Colonic mucosa (tissue), 4 donors: ENCODE measurements at regions of chr2 and their contacts with region 1.

Region 1: DNA sequence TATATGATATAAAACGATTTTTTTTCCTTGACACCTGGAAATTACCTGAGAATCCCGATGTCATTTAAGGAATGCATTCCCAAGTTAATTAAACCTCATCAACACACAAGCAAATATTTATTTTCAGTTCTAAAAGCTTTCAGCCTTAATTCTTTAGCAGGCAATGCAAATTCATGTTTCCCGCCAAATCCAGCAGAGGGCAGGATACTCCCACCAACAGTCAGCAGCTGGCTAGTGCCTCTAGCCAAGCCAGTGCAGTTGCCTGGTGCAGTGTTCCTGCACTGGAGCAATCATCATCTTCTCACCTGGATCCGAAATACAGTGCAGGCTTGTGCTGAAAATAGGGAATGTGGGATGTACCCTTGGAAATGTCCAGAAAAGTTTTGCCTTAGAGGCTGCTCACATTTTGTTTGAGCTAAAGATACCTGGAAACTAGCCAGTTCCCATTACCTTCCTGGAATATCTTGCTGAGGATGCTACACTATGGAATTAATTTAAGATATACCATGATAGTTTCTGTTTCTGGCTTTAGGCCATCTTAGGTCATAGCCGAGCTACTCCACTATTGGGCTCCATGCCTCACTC is 48.4 kb upstream of the CYTIP start:
- DNase-seq: peak; percentile 77
- H3K4me3 ChIP-seq: no peak overlapping the region
- H3K27ac ChIP-seq: no peak overlapping the region
- H3K4me1 ChIP-seq: no peaks in the 10 kb centered on the region
- H3K27me3 ChIP-seq: no peaks in the 10 kb centered on the region
- CTCF ChIP-seq: peak; percentile 64

Region 2: GRCh38 chr2:157302492-157303099 is 189.7 kb before region 1 on chr2:
- intact Hi-C with region 1: loop called (anchors 10 kb)
- DNase-seq: no peak
- H3K4me3 ChIP-seq: no peak overlapping the region
- H3K27ac ChIP-seq: no peak overlapping the region
- H3K4me1 ChIP-seq: no peaks in the 10 kb centered on the region
- H3K27me3 ChIP-seq: no peaks in the 10 kb centered on the region
- CTCF ChIP-seq: peak; percentile 71

Region 3: GRCh38 chr2:157336137-157337010 is 155.9 kb before region 1 on chr2:
- intact Hi-C with region 1: loop called (anchors 5 kb)
- DNase-seq: peak; percentile 36
- H3K4me3 ChIP-seq: no peak overlapping the region
- H3K27ac ChIP-seq: no peak overlapping the region
- H3K4me1 ChIP-seq: no peaks in the 10 kb centered on the region
- H3K27me3 ChIP-seq: no peaks in the 10 kb centered on the region
- CTCF ChIP-seq: peak; percentile 67

Region 4: DNA sequence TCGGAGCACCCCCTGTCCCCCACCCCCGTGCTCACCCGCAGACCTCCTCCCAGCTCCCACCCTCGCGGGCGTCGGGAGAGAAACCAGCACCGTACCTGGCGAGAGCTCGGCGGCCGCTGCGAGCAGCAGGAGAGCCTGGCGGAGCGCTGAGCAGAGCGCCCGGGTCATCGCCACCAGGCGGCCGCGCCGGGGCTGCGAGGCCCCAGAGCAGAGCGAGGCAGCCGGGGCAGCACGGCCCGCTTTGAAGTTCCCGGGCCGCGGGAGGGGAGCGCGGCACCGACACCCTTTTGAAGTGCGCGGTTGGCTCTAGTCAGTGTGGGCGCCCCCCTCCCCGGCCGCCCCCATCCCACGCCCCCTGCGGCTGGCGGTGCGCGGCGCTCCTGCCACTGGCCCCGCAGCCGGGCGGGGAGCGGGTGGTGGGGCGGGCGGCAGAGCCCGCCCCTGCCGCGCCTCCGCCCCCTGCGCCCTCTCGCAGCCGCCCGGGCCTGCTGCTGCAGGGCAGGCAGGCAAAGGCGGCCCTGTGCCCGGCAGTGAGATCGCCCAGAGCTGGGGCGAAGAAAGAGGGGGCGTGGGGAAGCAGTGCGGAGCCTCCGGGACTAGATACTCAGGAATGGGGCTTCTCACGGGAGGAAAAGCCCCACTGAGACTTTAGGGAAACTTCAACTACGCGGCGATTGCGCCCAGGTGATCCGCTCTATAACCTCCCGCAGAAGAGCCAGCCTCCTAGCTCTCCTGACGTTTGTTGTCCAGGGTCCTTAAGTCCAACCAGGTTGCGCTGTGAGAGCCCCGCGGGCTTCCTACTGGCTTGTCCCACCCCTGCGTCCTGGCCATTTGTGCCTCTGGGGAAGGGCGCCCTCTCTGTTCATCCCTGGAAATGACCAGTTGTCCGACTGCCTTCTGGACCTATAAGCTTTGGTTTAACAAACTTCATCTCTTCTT is 136.5 kb after region 1 on chr2 and contains the start of gene ACVR1C:
- intact Hi-C with region 1: loop called (anchors 10 kb)
- DNase-seq: peak; percentile 91
- H3K4me3 ChIP-seq: peak within 1 kb of the TSS; percentile 56
- H3K27ac ChIP-seq: peak within 1 kb of the TSS; percentile 84
- H3K4me1 ChIP-seq: no peaks in the 10 kb centered on the region
- H3K27me3 ChIP-seq: no peaks in the 10 kb centered on the region
- CTCF ChIP-seq: peak; percentile 68
- total RNA-seq, gene ACVR1C: 5.7 to 18.2 TPM

Region 5: GRCh38 chr2:157777427-157777826 is 285.1 kb after region 1 on chr2:
- intact Hi-C with region 1: loop called (anchors 10 kb)
- DNase-seq: peak; percentile 45
- H3K4me3 ChIP-seq: no peak overlapping the region
- H3K27ac ChIP-seq: no peak overlapping the region
- H3K4me1 ChIP-seq: no peaks in the 10 kb centered on the region
- H3K27me3 ChIP-seq: no peaks in the 10 kb centered on the region
- CTCF ChIP-seq: peak; percentile 47

Region 6: GRCh38 chr2:158006961-158007719 is 514.9 kb after region 1 on chr2:
- intact Hi-C with region 1: loop called (anchors 5 kb)
- DNase-seq: no peak
- H3K4me3 ChIP-seq: no peak overlapping the region
- H3K27ac ChIP-seq: no peak overlapping the region
- H3K4me1 ChIP-seq: no peaks in the 10 kb centered on the region
- H3K27me3 ChIP-seq: no peaks in the 10 kb centered on the region
- CTCF ChIP-seq: no peak